Activated CD4-positive, alpha-beta T cell treated with anti-CD3 and anti-CD28 coated beads, Interleukin-2, amount 10 ng/mL, durations not matched to agents 24 days and 14 days (primary cell): ENCODE measurements at regions of chr15 and their contacts with region 1.

Region 1: DNA sequence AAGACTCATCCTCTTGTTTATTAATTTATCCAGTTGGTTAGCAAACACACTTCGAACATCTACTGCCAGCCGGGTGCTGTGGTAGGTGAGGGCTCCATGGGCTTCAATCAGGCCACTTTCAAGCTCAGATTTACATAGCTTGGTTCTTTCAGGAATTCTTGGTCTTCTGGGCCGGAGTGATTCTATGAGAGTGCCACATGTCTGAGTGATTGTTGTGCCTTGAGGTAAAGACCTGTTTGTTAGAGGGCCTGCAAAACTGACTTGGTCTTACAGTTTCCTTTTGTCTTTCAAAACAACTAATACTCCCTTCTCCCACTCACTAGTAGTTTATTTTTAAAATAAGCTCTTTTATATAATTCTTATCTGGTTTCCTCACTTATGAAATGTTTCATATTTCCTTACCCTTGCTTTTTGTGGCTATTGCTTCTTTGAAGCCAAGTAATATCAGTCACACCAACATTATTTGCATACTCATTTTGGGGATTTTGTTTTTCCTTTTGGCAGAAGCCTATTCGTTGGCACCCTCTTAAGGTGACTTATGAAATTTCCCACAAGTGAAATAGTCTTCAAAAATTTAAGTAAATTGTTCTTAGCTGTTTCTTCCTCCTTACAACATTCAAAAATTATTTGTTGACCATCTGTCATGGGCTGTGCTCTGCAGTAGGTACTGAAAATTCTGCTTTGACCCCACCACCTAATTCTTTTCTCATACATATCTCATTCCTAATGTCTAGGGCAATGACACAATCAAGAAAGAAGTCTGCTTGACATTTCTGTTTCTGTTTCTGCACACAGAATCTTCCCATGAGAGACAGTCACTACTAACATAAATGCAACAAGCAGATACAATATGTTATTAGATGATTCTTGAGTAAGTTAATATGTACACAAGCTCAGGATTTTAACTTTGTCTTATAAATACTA is 120.2 kb downstream of the LRRC28 start:
- DNase-seq: no peak
- H3K4me3 Mint-ChIP-seq: peak overlapping the region; percentile 52
- H3K27ac Mint-ChIP-seq: peak overlapping the region; percentile 81
- H3K4me1 Mint-ChIP-seq: peaks cover 19% of the 10 kb centered on the region
- H3K27me3 Mint-ChIP-seq: no peaks in the 10 kb centered on the region

Region 2: GRCh38 chr15:99104788-99105513 is 266.5 kb before region 1 on chr15 and contains the start of gene SYNM:
- intact Hi-C with region 1: loop called (anchors 10 kb)
- DNase-seq: peak; percentile 85
- H3K4me3 Mint-ChIP-seq: peak within 1 kb of the TSS; percentile 77
- H3K27ac Mint-ChIP-seq: peak within 1 kb of the TSS; percentile 54
- H3K4me1 Mint-ChIP-seq: peaks cover 11% of the 10 kb centered on the region
- H3K27me3 Mint-ChIP-seq: peaks cover 45% of the 10 kb centered on the region
- total RNA-seq, gene SYNM: 0.79 and 1.1 TPM in 2 replicates

Region 3: DNA sequence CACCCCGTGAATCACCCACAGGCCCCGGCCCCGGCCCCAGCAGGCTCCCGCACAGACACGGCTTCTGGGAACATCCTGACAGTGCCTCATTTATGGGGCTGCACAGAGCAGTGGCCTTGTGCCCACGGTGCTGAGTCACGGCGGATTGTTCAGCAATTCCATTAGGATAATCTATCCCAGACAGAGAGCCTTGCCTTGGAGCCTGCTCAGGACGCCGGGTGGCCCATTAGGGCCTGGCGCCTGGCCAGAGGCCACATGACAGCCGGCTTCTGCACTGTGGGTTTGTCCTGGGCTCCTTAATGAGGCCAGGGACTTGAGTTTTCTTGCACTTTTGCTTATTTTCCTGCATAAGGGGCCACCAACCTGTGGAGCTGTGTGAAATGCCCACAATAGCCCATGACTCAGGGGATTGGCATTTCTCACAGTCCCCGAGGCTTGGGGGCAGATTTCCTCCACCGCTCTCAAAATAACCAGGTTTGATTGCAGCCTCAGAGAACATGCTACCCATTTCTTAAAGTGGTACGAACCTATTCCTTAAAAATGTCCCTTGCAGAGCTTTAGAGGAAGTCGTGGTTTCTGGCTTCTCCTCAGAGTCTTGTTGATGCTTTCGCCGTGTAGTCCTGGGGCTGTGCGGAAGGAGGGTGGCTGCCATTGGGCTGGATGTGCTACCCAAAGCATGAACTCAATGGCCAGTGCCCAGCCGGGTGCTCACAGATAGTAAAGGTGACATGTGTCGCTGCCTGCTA is 247.6 kb before region 1 on chr15:
- intact Hi-C with region 1: no loop called
- DNase-seq: no peak
- H3K4me3 Mint-ChIP-seq: no peak overlapping the region
- H3K27ac Mint-ChIP-seq: no peak overlapping the region
- H3K4me1 Mint-ChIP-seq: no peaks in the 10 kb centered on the region
- H3K27me3 Mint-ChIP-seq: peaks cover 1% of the 10 kb centered on the region

Region 4: GRCh38 chr15:99282121-99282520 is 89.3 kb before region 1 on chr15:
- intact Hi-C with region 1: loop called (anchors 1 kb)
- DNase-seq: peak; percentile 27
- H3K4me3 Mint-ChIP-seq: no peak overlapping the region
- H3K27ac Mint-ChIP-seq: peak overlapping the region; percentile 48
- H3K4me1 Mint-ChIP-seq: peaks cover 39% of the 10 kb centered on the region
- H3K27me3 Mint-ChIP-seq: no peaks in the 10 kb centered on the region

Region 5: DNA sequence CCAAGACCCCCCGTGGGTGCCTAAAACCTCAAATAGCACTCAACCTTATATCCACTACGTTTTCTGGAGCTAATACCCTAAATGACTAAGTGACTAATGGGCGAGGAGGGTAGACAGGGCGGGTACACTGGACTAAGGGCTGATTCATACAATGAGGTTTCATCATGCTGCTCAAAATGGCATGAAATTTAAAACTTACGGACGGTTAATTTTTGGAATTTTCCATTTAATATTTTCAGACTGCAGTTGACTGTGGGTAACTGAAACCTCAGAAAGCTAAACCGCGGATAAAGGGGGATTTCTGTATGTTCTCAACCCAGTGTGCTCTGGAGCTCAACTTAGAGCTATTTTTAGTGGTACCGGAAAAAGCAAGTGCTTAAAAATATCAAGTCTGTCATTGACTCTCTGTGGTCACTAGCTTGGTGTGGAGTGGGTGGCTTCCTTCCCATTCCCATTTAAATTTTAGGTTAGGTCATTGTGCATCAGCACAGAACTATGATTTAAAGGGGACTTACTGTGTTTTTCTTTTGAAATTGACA is 47.3 kb before region 1 on chr15:
- intact Hi-C with region 1: loop called (anchors 1 kb)
- DNase-seq: no peak
- H3K4me3 Mint-ChIP-seq: no peak overlapping the region
- H3K27ac Mint-ChIP-seq: peak overlapping the region; percentile 40
- H3K4me1 Mint-ChIP-seq: peaks cover 7% of the 10 kb centered on the region
- H3K27me3 Mint-ChIP-seq: no peaks in the 10 kb centered on the region

Region 6: DNA sequence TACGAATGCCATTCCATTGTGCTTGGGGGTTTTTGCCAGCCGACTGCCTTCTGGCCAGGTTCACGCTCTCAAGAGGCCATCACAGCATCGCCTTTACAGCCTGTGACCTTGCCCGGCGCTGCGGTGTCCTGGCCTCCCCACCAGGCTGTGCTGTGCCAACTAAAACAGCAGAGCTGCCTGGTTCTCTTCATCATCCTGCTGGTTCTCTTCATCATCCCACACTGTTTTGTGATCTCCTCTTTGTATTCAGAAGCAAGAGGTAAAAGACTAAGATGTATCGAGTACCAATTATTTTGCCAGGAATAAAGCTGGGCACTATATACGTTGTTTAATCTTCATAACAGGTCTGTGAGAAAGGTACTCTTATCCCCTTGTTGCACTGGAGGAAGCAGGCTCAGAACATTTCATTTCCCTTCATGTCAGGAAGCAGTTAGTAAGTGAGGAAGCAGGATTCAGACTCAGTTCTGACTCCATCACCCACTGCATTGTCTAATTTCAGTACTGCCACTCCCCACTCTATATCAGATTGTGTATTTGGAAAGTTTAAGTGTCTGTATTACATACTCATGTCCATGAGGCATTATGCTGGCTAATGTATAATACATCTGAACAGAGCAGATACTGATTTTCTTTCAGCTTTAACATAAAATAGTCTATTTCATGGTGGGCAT is 27.4 kb before region 1 on chr15:
- intact Hi-C with region 1: loop called (anchors 2 kb)
- DNase-seq: peak; percentile 78
- H3K4me3 Mint-ChIP-seq: no peak overlapping the region
- H3K27ac Mint-ChIP-seq: peak overlapping the region; percentile 34
- H3K4me1 Mint-ChIP-seq: peaks cover 6% of the 10 kb centered on the region
- H3K27me3 Mint-ChIP-seq: no peaks in the 10 kb centered on the region

Region 7: DNA sequence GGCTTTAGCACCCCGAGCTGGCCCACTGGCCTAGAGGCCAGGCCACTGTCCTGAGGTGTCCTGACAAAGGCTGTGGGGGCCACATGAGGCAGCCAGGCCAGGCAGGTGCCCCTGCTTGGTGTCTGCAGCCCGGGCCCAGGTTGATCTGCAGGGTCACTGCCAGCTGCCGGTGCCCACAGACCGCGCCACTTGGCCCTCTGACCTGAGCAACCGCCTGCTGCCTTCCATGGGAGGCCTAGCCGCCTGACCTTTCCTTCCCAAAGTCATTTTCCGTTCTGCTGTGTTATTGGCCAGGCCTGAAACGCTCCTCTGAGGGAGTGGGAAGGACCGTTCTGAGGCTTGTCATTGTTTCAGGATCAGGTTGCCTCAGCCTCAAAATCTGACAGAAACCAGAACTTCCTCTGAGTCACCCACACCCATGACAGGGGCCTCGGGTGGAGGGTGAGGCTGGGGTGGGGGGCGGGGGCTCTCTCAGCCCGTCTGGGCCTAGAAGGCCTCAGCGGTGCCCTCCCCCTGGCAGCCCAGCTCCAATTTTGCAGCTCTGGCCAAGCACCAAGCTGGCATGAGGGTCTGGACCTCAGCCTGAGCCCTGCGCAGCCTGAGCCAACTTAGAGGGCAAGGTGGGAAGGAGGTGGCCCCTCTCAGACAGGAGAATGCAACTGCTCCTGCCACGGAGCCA is 53.7 kb after region 1 on chr15:
- intact Hi-C with region 1: loop called (anchors 2 kb)
- DNase-seq: peak; percentile 86
- H3K4me3 Mint-ChIP-seq: peak overlapping the region; percentile 29
- H3K27ac Mint-ChIP-seq: peak overlapping the region; percentile 88
- H3K4me1 Mint-ChIP-seq: peaks cover 49% of the 10 kb centered on the region
- H3K27me3 Mint-ChIP-seq: peaks cover 4% of the 10 kb centered on the region